HEK293 (cell line): ENCODE measurements at regions of chr11 and their contacts with region 1.

Region 1: GRCh38 chr11:32918427-32918826 is 25.8 kb downstream of the QSER1 start:
- H3K4me3 ChIP-seq: no peak overlapping the region
- H3K27ac ChIP-seq: no peak overlapping the region
- H3K4me1 ChIP-seq: no peaks in the 10 kb centered on the region
- CTCF ChIP-seq: no peak

Region 2: DNA sequence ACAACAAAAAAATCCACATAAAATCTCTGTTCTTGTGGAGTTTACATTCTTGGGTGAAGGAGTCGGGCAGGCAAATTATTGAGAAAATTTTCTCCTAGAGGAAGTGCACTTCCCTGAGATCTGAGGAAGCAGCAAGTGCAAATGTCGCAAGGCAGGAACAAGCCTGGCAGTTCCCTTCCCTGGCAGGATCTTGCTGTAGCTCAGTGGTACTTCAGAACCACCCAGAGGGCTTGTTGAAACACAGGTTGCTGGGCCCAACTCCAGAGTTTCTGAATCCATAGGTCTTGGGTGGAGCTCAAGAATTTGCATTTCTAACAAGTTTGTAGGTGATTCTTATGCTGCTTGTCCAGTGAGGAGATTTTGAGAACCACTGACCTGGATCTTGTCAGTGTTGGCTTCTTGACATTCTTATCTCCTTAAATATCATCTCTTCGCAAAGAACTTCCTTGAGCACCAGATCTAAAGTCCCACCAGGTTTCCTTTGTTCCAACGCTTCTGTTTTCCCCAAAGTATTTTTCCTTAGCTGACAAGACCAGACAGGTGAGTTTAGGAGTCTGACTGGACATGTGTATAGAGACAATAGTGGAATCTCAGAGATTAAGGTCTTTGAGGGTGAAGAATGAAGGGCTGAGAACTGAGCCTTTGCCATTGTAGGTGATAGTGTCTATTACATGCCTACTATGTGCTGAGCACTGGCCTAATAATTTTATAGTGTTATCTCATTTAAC is 16.2 kb before region 1 on chr11:
- CTCF ChIA-PET with region 1: no interaction called
- POLR2A ChIA-PET with region 1: interaction called, 12 read pairs
- H3K4me3 ChIP-seq: no peak overlapping the region
- H3K27ac ChIP-seq: no peak overlapping the region
- H3K4me1 ChIP-seq: no peaks in the 10 kb centered on the region
- CTCF ChIP-seq: no peak